Mammary epithelial cell (primary cell): ENCODE measurements at regions of chr11 and their contacts with region 1.

Region 1: GRCh38 chr11:66976048-66976467 is 954 bp downstream of the C11orf86 start:
- DNase-seq: no peak
- H3K4me3 ChIP-seq: no peak overlapping the region
- H3K27ac ChIP-seq: no peak overlapping the region
- H3K4me1 ChIP-seq: peaks cover 15% of the 10 kb centered on the region
- H3K27me3 ChIP-seq: no peaks in the 10 kb centered on the region
- CTCF ChIP-seq: peak; percentile 52 to 76

Region 2: DNA sequence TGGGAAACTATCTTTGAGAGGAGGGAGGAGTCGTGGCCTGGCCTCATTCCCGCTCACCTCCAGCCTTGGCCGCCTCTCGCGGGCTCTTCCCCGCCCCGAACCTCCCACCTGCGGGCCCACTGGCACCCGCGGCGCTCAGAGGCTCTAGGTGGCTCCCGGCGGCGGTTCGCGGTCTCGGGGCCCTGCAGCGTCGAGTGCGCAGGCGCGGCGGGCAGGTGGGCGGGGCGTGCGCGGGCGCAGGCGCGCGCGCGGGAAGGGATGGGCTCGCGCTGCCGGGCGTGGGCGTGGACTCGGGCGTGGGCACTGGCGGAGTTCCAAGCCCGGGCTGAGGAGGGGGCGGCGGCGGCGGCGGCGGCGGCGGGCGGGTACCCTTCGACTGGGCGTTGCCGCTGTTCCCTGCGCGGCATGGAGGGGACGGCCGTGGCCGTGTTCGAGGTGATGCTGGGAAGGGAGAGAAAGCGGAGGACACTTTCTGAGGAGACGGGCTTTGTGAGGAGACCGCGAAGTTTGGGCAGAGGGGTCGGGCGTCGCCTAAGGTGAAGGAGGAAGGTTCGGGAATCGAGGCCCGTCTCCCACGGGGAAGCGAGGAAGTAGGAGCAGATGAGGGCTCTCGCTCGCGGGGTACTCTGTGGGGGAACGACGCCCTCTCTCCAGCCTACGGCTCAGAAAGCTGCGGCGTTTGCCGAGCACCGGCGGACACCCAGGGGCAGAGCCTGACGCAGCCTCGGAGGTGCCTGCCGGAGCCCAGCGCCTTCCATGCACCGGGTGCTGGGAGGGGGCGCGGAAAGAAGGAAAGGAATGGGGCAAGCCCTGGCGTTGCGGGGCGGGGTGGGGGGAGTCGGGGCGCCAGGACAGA is 231.3 kb before region 1 on chr11:
- CTCF ChIA-PET with region 1: interaction called, 12 read pairs
- dilution Hi-C with region 1: no loop called
- in situ Hi-C with region 1: no loop called
- intact Hi-C with region 1: no loop called
- DNase-seq: peak; percentile 82
- H3K4me3 ChIP-seq: peak overlapping the region; percentile 66 to 97 (median 84)
- H3K27ac ChIP-seq: peak overlapping the region; percentile 92
- H3K4me1 ChIP-seq: peaks cover 28% of the 10 kb centered on the region
- H3K27me3 ChIP-seq: no peaks in the 10 kb centered on the region
- CTCF ChIP-seq: no peak

Region 3: GRCh38 chr11:66987158-66987620 is 11.1 kb after region 1 on chr11:
- CTCF ChIA-PET with region 1: interaction called, 27 read pairs
- dilution Hi-C with region 1: no loop called
- in situ Hi-C with region 1: no loop called
- intact Hi-C with region 1: no loop called
- DNase-seq: no peak
- H3K4me3 ChIP-seq: no peak overlapping the region
- H3K27ac ChIP-seq: no peak overlapping the region
- H3K4me1 ChIP-seq: peaks cover 33% of the 10 kb centered on the region
- H3K27me3 ChIP-seq: no peaks in the 10 kb centered on the region
- CTCF ChIP-seq: no peak

Region 4: DNA sequence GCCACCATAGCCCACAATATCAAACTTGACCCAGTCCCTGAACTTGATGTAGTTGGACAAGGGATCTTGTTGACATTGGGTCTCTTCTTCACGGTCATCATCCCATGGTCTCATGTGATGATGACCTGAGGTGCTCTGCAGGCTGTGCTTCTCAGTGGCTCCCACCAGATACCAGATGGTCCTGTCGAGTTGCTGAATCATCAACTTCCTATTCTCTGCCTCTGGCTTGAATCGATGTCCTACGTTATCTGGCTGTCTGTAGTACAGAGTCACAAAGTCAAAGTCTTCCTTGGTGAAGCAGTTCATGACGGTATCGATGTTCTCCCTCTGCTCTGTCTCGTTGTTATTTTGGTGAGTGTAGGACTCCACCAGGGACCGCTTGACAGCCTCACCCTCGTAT is 844.0 kb after region 1 on chr11:
- CTCF ChIA-PET with region 1: no interaction called
- dilution Hi-C with region 1: no loop called
- in situ Hi-C with region 1: no loop called
- intact Hi-C with region 1: no loop called
- DNase-seq: no peak
- H3K4me3 ChIP-seq: no peak overlapping the region
- H3K27ac ChIP-seq: no peak overlapping the region
- H3K4me1 ChIP-seq: no peaks in the 10 kb centered on the region
- H3K27me3 ChIP-seq: peaks cover 5% of the 10 kb centered on the region
- CTCF ChIP-seq: no peak